ENCODE measurements at regions of chr3 and their contacts with region 1.

Region 1: DNA sequence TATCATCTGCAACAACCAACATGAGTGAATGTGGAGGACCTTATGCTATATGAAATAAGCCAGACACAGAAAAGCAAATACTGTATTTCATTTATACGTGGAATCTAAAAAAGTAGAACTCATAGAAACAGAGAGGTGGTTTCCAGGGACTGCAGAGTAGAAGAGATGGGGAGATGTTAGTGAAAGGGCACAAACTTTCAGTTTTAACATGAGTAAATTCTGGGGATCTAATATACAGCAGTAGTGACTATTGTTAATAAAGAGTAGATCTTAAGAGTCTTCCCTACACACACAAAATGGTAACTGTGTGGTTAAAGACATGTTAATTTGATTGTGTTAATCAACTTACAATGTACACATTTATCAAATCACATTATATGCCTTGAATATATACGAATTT is 20.9 kb upstream of the MELTF start:
- DNase-seq: no peak
- H3K4me3 Mint-ChIP-seq: no peak overlapping the region
- H3K27ac Mint-ChIP-seq: no peak overlapping the region
- H3K4me1 Mint-ChIP-seq: no peaks in the 10 kb centered on the region
- H3K27me3 Mint-ChIP-seq: no peaks in the 10 kb centered on the region
- CTCF ChIP-seq: no peak

Region 2: GRCh38 chr3:197035577-197035976 is 14.9 kb before region 1 on chr3:
- CTCF ChIA-PET with region 1: no interaction called
- POLR2A ChIA-PET with region 1: interaction called, 11 read pairs
- intact Hi-C with region 1: no loop called
- DNase-seq: no peak
- H3K4me3 Mint-ChIP-seq: no peak overlapping the region
- H3K27ac Mint-ChIP-seq: peak overlapping the region; percentile 8
- H3K4me1 Mint-ChIP-seq: peaks cover 22% of the 10 kb centered on the region
- H3K27me3 Mint-ChIP-seq: no peaks in the 10 kb centered on the region
- CTCF ChIP-seq: no peak

Region 3: GRCh38 chr3:197076415-197076814 is 25.9 kb after region 1 on chr3:
- CTCF ChIA-PET with region 1: no interaction called
- POLR2A ChIA-PET with region 1: no interaction called
- intact Hi-C with region 1: no loop called
- DNase-seq: no peak
- H3K4me3 Mint-ChIP-seq: no peak overlapping the region
- H3K27ac Mint-ChIP-seq: no peak overlapping the region
- H3K4me1 Mint-ChIP-seq: no peaks in the 10 kb centered on the region
- H3K27me3 Mint-ChIP-seq: no peaks in the 10 kb centered on the region
- CTCF ChIP-seq: no peak

Measured in MCF 10A (cell line).